BJ (cell line): ENCODE measurements at regions of chr22 and their contacts with region 1.

Region 1: GRCh38 chr22:31676700-31677099 is 14.7 kb upstream of the PISD start:
- DNase-seq: peak; percentile 60
- H3K4me3 ChIP-seq: peak overlapping the region; percentile 35
- H3K27me3 ChIP-seq: no peaks in the 10 kb centered on the region
- CTCF ChIP-seq: no peak

Region 2: DNA sequence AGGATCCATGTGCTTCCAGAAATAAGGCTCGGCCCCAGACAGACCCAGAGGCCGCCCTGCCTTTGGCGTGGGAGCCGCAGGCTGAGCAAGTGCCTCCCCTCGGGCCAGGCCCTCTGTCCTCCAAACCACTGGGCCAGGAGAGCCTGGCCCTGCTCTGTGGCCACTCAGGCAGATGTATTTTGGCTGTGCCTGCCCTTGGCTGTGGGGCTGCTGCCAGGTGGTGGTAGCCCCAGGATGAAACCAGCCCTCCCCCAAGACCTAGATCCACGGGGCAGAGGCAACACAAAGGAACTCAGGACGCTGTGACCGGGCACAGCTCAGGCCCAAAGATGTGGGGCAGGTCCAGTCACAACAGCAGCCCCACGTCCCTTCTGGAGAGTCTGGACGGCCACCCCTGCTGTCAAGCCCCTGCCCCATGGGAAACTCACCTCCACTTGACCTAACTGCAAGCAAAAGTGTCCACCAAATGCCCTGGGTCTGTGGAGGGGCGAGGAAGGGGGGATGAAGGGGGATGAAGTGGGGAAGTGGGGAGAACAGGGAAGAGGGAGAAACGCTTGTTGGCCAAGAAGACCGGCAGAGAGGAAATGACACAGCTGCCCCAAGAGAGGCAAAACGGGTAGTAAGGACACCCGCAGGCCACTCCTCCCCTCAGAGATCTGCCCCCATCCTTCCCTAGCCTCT is 38.6 kb before region 1 on chr22:
- CTCF ChIA-PET with region 1: no interaction called
- POLR2A ChIA-PET with region 1: no interaction called
- DNase-seq: no peak
- H3K4me3 ChIP-seq: no peak overlapping the region
- H3K27me3 ChIP-seq: no peaks in the 10 kb centered on the region
- CTCF ChIP-seq: no peak

Region 3: GRCh38 chr22:31695423-31695822 is 18.7 kb after region 1 on chr22:
- CTCF ChIA-PET with region 1: no interaction called
- POLR2A ChIA-PET with region 1: no interaction called
- DNase-seq: no peak
- H3K4me3 ChIP-seq: no peak overlapping the region
- H3K27me3 ChIP-seq: no peaks in the 10 kb centered on the region
- CTCF ChIP-seq: no peak

Region 4: GRCh38 chr22:31738566-31738965 is 61.9 kb after region 1 on chr22:
- CTCF ChIA-PET with region 1: no interaction called
- POLR2A ChIA-PET with region 1: interaction called, 11 read pairs
- DNase-seq: no peak
- H3K4me3 ChIP-seq: no peak overlapping the region
- H3K27me3 ChIP-seq: no peaks in the 10 kb centered on the region
- CTCF ChIP-seq: no peak

Region 5: GRCh38 chr22:31857247-31857646 is 180.5 kb after region 1 on chr22:
- CTCF ChIA-PET with region 1: no interaction called
- POLR2A ChIA-PET with region 1: no interaction called
- DNase-seq: no peak
- H3K4me3 ChIP-seq: no peak overlapping the region
- H3K27me3 ChIP-seq: no peaks in the 10 kb centered on the region
- CTCF ChIP-seq: no peak